Aorta (tissue), 5 donors: ENCODE measurements at regions of chr7 and their contacts with region 1.

Region 1: GRCh38 chr7:158976849-158977593 is 120.7 kb downstream of the DYNC2I1 start:
- DNase-seq: peak; percentile 86 to 94
- ATAC-seq: peak; percentile 89
- H3K4me3 ChIP-seq: no peak overlapping the region
- H3K27ac ChIP-seq: no peak overlapping the region
- H3K4me1 ChIP-seq: no peaks in the 10 kb centered on the region
- H3K27me3 ChIP-seq: no peaks in the 10 kb centered on the region

Region 2: GRCh38 chr7:158695726-158696452 is 281.1 kb before region 1 on chr7:
- intact Hi-C with region 1: loop called in 1 of 2 experiments (anchors 2 kb)
- DNase-seq: peak in 1 of 2 donors; percentile 69
- ATAC-seq: peak; percentile 91
- H3K4me3 ChIP-seq: no peak overlapping the region
- H3K27ac ChIP-seq: no peak overlapping the region
- H3K4me1 ChIP-seq: peaks cover 0 to 3% of the 10 kb centered on the region in 2 donors
- H3K27me3 ChIP-seq: no peaks in the 10 kb centered on the region

Region 3: GRCh38 chr7:158935062-158935461 is 42.0 kb before region 1 on chr7:
- intact Hi-C with region 1: no loop called
- DNase-seq: no peak
- ATAC-seq: no peak
- H3K4me3 ChIP-seq: no peak overlapping the region
- H3K27ac ChIP-seq: no peak overlapping the region
- H3K4me1 ChIP-seq: no peaks in the 10 kb centered on the region
- H3K27me3 ChIP-seq: no peaks in the 10 kb centered on the region